Activated B cell treated with CpG ODN at 0.5 μM for 24 hours (primary cell): ENCODE measurements at regions of chr2 and their contacts with region 1.

Region 1: GRCh38 chr2:16608661-16609643 is 56.7 kb downstream of the CYRIA start:
- DNase-seq: peak; percentile 79
- ATAC-seq: peak; percentile 92
- H3K4me3 Mint-ChIP-seq: peak overlapping the region; percentile 79
- H3K27ac Mint-ChIP-seq: peak overlapping the region; percentile 53
- H3K4me1 Mint-ChIP-seq: peaks cover 31% of the 10 kb centered on the region
- H3K27me3 Mint-ChIP-seq: no peaks in the 10 kb centered on the region
- CTCF ChIP-seq: peak; percentile 83

Region 2: GRCh38 chr2:15636972-15637785 is 971.8 kb before region 1 on chr2:
- CTCF ChIA-PET with region 1: no interaction called
- POLR2A ChIA-PET with region 1: no interaction called
- intact Hi-C with region 1: loop called (anchors 1 kb)
- DNase-seq: peak; percentile 35
- ATAC-seq: peak; percentile 66
- H3K4me3 Mint-ChIP-seq: no peak overlapping the region
- H3K27ac Mint-ChIP-seq: no peak overlapping the region
- H3K4me1 Mint-ChIP-seq: no peaks in the 10 kb centered on the region
- H3K27me3 Mint-ChIP-seq: no peaks in the 10 kb centered on the region
- CTCF ChIP-seq: no peak

Region 3: GRCh38 chr2:16142383-16143361 is 466.3 kb before region 1 on chr2:
- CTCF ChIA-PET with region 1: no interaction called
- POLR2A ChIA-PET with region 1: no interaction called
- intact Hi-C with region 1: no loop called
- DNase-seq: no peak
- ATAC-seq: no peak
- H3K4me3 Mint-ChIP-seq: no peak overlapping the region
- H3K27ac Mint-ChIP-seq: no peak overlapping the region
- H3K4me1 Mint-ChIP-seq: no peaks in the 10 kb centered on the region
- H3K27me3 Mint-ChIP-seq: no peaks in the 10 kb centered on the region
- CTCF ChIP-seq: no peak

Region 4: DNA sequence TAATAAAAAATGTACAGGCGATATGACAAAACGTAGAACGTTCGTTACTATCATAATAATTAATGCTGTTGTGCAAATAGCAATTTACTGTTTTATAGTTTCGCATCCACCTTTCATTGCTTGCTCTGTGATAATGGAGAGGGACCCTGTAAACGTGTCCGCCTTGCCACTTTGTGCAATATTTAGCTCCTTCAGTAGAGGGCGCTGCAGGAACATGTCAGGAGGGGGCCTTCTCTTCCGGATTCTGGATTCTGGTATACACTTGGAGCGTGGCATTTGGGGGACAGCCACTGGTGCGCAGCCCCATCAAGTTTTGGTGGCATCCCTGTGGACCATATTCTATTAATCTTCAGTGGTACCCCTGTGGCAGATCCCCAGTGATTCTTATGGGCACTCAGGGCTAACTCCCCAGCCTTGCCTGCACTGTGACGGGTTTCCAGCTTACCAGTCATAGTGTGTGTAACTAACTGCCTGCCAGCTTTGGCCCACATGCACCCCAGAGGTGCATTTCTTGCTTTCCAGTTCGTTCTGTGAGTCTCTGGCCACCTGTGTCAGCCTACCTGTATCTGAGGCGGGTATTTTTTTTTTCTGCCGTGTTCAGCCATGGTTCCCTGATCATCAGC is 83.6 kb before region 1 on chr2:
- CTCF ChIA-PET with region 1: interaction called, 3 read pairs
- POLR2A ChIA-PET with region 1: no interaction called
- intact Hi-C with region 1: loop called (anchors 1 kb)
- DNase-seq: no peak
- ATAC-seq: no peak
- H3K4me3 Mint-ChIP-seq: no peak overlapping the region
- H3K27ac Mint-ChIP-seq: no peak overlapping the region
- H3K4me1 Mint-ChIP-seq: no peaks in the 10 kb centered on the region
- H3K27me3 Mint-ChIP-seq: peaks cover 30% of the 10 kb centered on the region
- CTCF ChIP-seq: no peak

Region 5: DNA sequence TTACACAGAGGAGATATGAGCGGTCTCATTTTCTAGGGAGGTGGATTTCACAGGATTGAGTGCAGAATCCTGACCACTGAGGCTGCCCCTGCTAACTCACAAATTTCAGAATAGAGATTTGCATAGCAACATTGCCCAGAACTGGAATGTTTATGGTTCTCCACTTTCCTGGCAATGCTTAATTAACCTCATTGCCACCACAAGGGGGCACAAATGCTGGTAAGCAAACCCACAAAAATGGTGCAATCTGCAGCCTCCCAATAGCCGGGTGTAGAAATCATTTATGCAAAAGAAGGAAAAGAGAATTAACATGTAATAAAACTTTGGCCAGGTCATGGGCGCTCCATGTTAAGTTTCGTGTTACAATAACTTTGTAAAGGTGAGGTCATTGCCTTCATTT is 55.7 kb before region 1 on chr2:
- CTCF ChIA-PET with region 1: interaction called, 4 read pairs
- POLR2A ChIA-PET with region 1: no interaction called
- intact Hi-C with region 1: loop called (anchors 1 kb)
- DNase-seq: no peak
- ATAC-seq: no peak
- H3K4me3 Mint-ChIP-seq: no peak overlapping the region
- H3K27ac Mint-ChIP-seq: no peak overlapping the region
- H3K4me1 Mint-ChIP-seq: no peaks in the 10 kb centered on the region
- H3K27me3 Mint-ChIP-seq: no peaks in the 10 kb centered on the region
- CTCF ChIP-seq: no peak

Region 6: GRCh38 chr2:16630463-16630862 is 21.5 kb after region 1 on chr2:
- CTCF ChIA-PET with region 1: interaction called, 42 read pairs
- POLR2A ChIA-PET with region 1: no interaction called
- intact Hi-C with region 1: loop called (anchors 1 kb)
- DNase-seq: no peak
- ATAC-seq: peak; percentile 64
- H3K4me3 Mint-ChIP-seq: no peak overlapping the region
- H3K27ac Mint-ChIP-seq: peak overlapping the region; percentile 83
- H3K4me1 Mint-ChIP-seq: peaks cover 99% of the 10 kb centered on the region
- H3K27me3 Mint-ChIP-seq: no peaks in the 10 kb centered on the region
- CTCF ChIP-seq: no peak

Region 7: DNA sequence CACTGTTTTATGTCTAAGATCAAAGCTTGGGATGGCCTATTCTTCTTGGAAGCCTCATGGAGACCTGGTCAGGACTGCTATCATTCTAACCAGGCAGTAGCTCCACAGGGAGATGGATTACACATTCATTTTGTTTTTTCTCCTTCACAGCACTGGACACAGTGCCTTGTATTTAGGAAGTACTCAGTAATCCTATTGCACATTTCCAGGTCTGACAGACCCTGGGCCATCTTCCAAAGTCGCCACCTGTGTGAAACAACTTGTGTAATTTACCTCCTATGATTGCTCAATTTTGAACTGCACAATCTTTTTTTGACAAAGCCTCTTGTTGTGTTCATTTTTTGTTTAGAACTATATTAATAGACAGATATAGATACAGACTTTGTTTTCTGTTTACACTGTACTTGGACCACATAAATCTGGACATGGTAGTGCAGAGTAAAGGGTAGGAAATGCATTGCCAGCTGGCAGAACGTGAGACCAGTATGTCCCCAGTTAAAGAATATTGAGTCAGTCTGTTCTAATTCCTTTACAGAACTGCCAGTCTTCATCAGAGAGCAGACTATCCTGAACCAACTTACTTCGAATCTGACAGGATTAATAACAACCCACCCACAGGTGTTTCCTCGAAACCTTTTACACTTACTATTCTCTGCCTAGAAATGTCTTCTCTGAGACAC is 334.5 kb after region 1 on chr2:
- CTCF ChIA-PET with region 1: no interaction called
- POLR2A ChIA-PET with region 1: no interaction called
- intact Hi-C with region 1: no loop called
- DNase-seq: no peak
- ATAC-seq: no peak
- H3K4me3 Mint-ChIP-seq: no peak overlapping the region
- H3K27ac Mint-ChIP-seq: no peak overlapping the region
- H3K4me1 Mint-ChIP-seq: peaks cover 21% of the 10 kb centered on the region
- H3K27me3 Mint-ChIP-seq: no peaks in the 10 kb centered on the region
- CTCF ChIP-seq: no peak

Region 8: DNA sequence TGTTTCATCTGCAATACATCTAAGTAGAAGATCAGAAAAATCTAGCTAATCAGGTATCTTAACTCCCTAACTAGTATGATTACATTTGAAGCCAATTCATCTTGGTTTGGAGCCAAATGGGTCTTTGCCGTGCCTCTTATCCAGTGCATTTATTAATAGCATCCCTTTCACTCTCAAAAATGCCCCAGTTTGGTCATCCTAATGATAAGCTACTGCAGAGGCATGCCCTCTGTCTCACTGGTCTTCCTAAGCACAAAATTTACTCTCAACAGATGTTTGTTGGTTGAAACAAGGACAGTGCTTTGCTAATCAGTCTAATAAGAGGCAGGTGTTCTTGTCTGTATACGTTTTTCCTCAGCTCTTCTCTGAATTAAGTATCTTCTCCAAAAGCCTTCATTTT is 506.1 kb after region 1 on chr2:
- CTCF ChIA-PET with region 1: no interaction called
- POLR2A ChIA-PET with region 1: no interaction called
- intact Hi-C with region 1: no loop called
- DNase-seq: no peak
- ATAC-seq: no peak
- H3K4me3 Mint-ChIP-seq: no peak overlapping the region
- H3K27ac Mint-ChIP-seq: no peak overlapping the region
- H3K4me1 Mint-ChIP-seq: no peaks in the 10 kb centered on the region
- H3K27me3 Mint-ChIP-seq: no peaks in the 10 kb centered on the region
- CTCF ChIP-seq: no peak